CD8-positive, alpha-beta T cell (primary cell): ENCODE measurements at regions of chr7 and their contacts with region 1.

Region 1: DNA sequence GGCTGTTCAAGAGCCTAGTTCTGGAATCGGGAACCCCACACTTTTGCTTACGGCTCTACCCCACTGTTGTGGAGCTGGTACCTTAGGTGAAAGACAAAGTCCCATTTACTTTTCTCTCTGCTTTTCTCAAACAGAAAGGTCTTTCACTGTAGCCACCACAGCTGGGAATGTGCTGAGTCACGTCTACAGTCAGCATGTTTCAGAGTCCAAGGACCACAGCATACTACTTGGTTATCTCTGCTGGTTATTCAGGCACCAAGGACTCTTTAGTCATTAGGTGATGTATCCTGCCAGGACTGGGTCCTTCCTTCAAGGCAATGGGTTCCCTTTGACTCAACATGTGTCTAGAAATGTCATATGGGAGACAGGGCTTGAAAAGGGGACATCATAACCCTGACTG is 266.8 kb upstream of the STEAP1 start:
- DNase-seq: no peak
- ATAC-seq: no peak
- H3K4me3 ChIP-seq: no peak overlapping the region
- H3K4me3 Mint-ChIP-seq: no peak overlapping the region
- H3K27ac ChIP-seq: no peak overlapping the region
- H3K27ac Mint-ChIP-seq: no peak overlapping the region
- H3K4me1 ChIP-seq: no peaks in the 10 kb centered on the region
- H3K4me1 Mint-ChIP-seq: no peaks in the 10 kb centered on the region
- H3K27me3 ChIP-seq: no peaks in the 10 kb centered on the region
- H3K27me3 Mint-ChIP-seq: no peaks in the 10 kb centered on the region
- CTCF ChIP-seq: no peak

Region 2: DNA sequence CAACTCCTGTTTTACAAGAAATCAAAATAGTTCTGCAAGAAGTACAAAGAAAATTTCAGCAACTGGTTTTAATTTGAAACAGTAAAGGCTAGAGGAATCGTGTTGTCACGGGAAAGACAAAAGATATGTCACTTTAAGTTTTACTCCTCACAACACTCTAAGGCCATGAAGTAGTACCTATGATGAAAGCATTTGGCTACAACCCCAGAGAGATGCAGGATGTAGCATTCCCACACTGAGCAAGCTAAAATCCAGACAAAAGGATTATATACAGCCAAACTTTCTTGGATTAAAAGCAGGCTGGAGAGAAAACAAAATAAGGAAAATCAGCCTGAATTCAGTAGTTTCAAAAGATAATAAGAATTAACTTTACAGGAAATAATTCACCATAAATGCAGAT is 21.2 kb after region 1 on chr7:
- CTCF ChIA-PET with region 1: no interaction called
- POLR2A ChIA-PET with region 1: no interaction called
- intact Hi-C with region 1: loop called in 1 of 2 experiments (anchors 1 kb)
- DNase-seq: no peak
- ATAC-seq: no peak
- H3K4me3 ChIP-seq: no peak overlapping the region
- H3K4me3 Mint-ChIP-seq: no peak overlapping the region
- H3K27ac ChIP-seq: no peak overlapping the region
- H3K27ac Mint-ChIP-seq: no peak overlapping the region
- H3K4me1 ChIP-seq: no peaks in the 10 kb centered on the region
- H3K4me1 Mint-ChIP-seq: no peaks in the 10 kb centered on the region
- H3K27me3 ChIP-seq: no peaks in the 10 kb centered on the region
- H3K27me3 Mint-ChIP-seq: no peaks in the 10 kb centered on the region
- CTCF ChIP-seq: no peak

Region 3: DNA sequence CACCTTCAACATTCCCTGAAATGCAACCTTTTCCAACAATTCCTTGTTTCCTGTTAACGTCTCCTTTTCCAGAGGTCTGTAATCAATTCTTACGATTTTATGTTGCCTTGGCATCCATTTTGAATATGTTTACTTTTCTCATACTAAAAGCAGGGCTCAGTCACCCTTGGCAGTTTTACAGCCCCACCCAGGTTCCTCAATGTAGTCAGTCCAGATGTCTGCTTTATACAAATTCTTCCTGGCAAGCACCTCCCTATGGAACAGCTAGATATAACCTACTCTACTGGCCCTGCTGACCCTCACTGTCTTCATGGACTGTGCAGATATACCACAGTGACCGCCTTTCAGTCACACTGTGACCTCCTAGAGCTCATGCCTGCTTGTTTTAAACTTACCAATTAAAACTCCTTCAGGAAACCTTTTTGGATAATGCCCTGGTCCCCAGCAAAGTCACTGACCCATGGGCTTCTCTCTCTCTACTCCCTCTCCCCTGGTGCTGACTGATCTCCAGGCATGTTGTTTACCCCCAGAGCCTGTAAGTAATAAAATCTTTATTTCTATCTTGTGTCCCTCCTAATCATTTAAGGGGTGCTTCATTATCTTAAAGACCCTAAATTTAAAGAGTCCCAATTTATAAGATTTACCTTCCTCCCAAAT is 119.6 kb after region 1 on chr7:
- CTCF ChIA-PET with region 1: no interaction called
- POLR2A ChIA-PET with region 1: no interaction called
- intact Hi-C with region 1: no loop called
- DNase-seq: no peak
- ATAC-seq: no peak
- H3K4me3 ChIP-seq: no peak overlapping the region
- H3K4me3 Mint-ChIP-seq: no peak overlapping the region
- H3K27ac ChIP-seq: no peak overlapping the region
- H3K27ac Mint-ChIP-seq: no peak overlapping the region
- H3K4me1 ChIP-seq: no peaks in the 10 kb centered on the region
- H3K4me1 Mint-ChIP-seq: no peaks in the 10 kb centered on the region
- H3K27me3 ChIP-seq: no peaks in the 10 kb centered on the region
- H3K27me3 Mint-ChIP-seq: no peaks in the 10 kb centered on the region
- CTCF ChIP-seq: no peak